Transverse colon (tissue), 4 donors: ENCODE measurements at regions of chr13 and their contacts with region 1.

Region 1: DNA sequence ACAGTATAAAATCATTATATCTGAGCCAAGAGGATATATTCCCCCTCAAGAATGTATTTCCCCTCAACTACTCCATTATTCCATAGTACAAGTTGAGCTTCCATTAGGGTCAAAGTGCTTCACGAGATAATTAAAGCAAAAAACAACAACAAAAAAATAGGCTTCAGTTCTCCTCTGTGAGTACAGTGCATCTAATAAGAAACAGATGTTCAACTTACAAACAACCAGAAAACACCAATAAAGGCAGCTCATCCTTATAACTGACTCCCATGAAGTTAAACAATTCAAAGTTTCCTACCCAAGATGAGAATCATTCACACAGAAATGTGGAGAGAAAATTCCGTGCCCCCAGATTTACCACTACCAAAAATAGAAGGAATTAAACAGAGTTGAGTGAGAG is 854.4 kb downstream of the PCDH9 start:
- DNase-seq: no peak
- H3K4me3 ChIP-seq: no peak overlapping the region
- H3K27ac ChIP-seq: no peak overlapping the region
- H3K4me1 ChIP-seq: no peaks in the 10 kb centered on the region
- H3K27me3 ChIP-seq: no peaks in the 10 kb centered on the region
- CTCF ChIP-seq: no peak
- EP300 ChIP-seq: no peak
- POLR2A ChIP-seq: no peak

Region 2: GRCh38 chr13:65275838-65276630 is 1099.7 kb before region 1 on chr13:
- in situ Hi-C with region 1: no loop called
- intact Hi-C with region 1: no loop called
- DNase-seq: no peak
- H3K4me3 ChIP-seq: no peak overlapping the region
- H3K27ac ChIP-seq: no peak overlapping the region
- H3K4me1 ChIP-seq: no peaks in the 10 kb centered on the region
- H3K27me3 ChIP-seq: no peaks in the 10 kb centered on the region
- CTCF ChIP-seq: no peak
- EP300 ChIP-seq: no peak
- POLR2A ChIP-seq: no peak

Region 3: GRCh38 chr13:65892859-65893258 is 482.9 kb before region 1 on chr13:
- in situ Hi-C with region 1: no loop called
- intact Hi-C with region 1: loop called (anchors 5 kb)
- DNase-seq: no peak
- H3K4me3 ChIP-seq: no peak overlapping the region
- H3K27ac ChIP-seq: no peak overlapping the region
- H3K4me1 ChIP-seq: no peaks in the 10 kb centered on the region
- H3K27me3 ChIP-seq: no peaks in the 10 kb centered on the region
- CTCF ChIP-seq: no peak
- EP300 ChIP-seq: no peak
- POLR2A ChIP-seq: no peak